ENCODE measurements at regions of chr1 and their contacts with region 1.

Region 1: DNA sequence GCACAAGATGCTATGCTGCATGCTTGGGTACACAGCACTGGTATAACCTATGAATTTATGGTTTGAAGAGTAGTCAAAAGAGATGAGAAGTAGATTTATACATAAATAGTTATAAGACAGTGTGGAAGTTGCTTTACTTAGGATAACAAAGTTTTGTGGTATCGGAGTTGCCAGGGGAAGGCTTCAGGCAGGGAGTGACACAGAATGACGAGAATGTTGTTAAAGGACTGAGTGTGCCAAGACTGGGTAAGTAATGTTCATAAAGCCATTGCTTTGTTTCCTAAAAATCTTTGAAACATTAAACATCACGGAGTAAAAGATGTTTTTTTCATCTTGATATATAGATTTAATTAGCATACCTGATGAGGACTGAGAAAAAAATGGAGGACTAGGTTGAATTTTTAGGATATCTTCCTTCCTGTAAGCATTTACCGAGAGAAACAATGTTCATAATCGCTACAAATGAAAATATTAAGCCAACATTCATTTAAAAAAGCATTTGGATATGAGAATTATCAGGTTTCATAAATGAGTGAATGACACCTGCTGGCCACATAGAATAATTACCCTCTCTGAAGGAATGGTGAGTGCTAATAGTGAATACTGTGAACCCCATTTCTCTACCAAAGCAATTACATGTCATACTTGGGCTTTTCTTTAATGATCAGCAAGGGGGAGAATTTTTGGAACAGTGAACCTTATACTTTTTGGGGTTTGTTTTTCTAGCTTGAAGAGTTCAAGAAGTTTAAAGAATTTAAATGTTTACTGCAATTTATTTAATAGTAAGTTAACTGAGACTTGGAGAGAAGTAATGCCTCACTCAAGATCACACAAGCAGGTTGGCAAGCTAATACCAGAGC is 28.4 kb downstream of the EXTL2 start:
- DNase-seq: no peak
- H3K4me3 ChIP-seq: no peak overlapping the region
- H3K27ac ChIP-seq: no peak overlapping the region
- H3K4me1 ChIP-seq: no peaks in the 10 kb centered on the region
- H3K27me3 ChIP-seq: no peaks in the 10 kb centered on the region
- CTCF ChIP-seq: peak in 2 of 3 experiments; percentile 17 to 33
- POLR2A ChIP-seq: no peak

Region 2: GRCh38 chr1:100459358-100460114 is 406.7 kb before region 1 on chr1:
- intact Hi-C with region 1: loop called (anchors 5 kb)
- DNase-seq: no peak
- H3K4me3 ChIP-seq: no peak overlapping the region
- H3K27ac ChIP-seq: no peak overlapping the region
- H3K4me1 ChIP-seq: peaks cover 5% of the 10 kb centered on the region
- H3K27me3 ChIP-seq: no peaks in the 10 kb centered on the region
- CTCF ChIP-seq: peak; percentile 64 to 83 (median 82)
- POLR2A ChIP-seq: no peak

Region 3: DNA sequence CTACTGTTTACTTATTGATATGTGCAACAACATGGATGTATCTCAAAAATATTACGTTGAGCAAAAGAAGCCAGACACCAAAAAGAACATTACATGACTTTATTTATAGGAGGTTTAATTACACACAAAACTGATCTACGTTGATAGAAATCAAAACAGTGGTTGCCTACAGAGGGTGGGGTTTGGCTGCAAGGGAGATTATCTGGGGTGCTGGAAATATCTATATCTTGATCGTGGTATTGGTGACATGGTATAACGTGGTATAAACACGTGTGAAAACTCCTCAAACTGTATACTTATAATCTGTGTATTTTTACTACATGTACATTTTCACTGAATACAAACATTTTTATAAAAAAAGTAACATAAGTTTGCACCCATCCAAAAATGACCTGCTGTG is 409.4 kb after region 1 on chr1:
- intact Hi-C with region 1: no loop called
- DNase-seq: no peak
- H3K4me3 ChIP-seq: no peak overlapping the region
- H3K27ac ChIP-seq: no peak overlapping the region
- H3K4me1 ChIP-seq: no peaks in the 10 kb centered on the region
- H3K27me3 ChIP-seq: no peaks in the 10 kb centered on the region
- CTCF ChIP-seq: no peak
- POLR2A ChIP-seq: no peak